ENCODE measurements at regions of chr5 and their contacts with region 1.

Region 1: DNA sequence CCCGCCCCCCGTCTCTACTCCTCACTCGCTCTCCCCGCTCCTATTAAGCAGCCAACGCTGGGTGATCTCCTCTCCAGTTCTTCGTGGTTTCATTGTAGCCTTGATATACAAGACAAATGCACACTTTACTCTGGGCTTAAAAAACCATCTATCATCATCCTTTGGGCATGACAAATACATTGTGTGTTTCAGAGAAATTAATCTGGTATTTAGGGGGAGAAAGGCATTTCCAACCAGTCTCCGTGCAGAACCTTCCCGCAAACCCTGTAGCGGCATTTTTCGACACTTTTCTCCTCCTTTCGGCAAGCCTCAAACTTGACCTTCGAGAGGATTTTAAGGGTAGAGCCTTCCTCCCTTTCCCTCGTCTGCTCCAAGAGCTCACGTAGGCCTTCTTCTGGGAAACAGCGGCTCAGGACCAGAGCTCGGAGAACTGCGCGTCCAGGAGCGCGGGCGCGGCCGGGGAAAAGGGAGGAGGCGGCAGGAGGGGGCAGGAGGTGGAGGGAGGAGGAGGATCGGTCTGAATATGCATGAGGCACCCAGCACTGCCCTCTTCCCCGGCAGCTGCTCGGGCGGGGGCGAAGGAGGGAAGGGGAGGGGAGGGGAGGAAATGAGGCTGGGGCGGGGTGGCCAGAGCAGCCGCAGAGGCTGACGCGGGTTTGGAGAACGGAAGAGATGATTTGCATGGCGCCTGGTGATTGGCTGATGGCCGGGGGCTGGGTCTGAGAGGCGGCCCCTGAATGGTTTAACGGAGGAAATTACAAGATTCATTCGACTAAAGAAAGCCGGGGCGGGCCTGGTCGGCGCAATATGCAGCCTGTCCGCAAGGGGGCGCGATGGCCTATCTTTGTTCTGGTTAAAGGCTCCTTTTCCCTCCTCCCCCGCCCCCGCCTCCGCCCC is 127.5 kb downstream of the TMEM161B start:
- DNase-seq: peak; percentile 93
- H3K4me3 Mint-ChIP-seq: no peak overlapping the region
- H3K27ac Mint-ChIP-seq: no peak overlapping the region
- H3K4me1 Mint-ChIP-seq: peaks cover 9% of the 10 kb centered on the region
- H3K27me3 Mint-ChIP-seq: peaks cover 43% of the 10 kb centered on the region

Region 2: GRCh38 chr5:87780831-87781760 is 360.0 kb before region 1 on chr5:
- CTCF ChIA-PET with region 1: no interaction called
- intact Hi-C with region 1: loop called (anchors 2 kb)
- DNase-seq: peak; percentile 88
- H3K4me3 Mint-ChIP-seq: no peak overlapping the region
- H3K27ac Mint-ChIP-seq: no peak overlapping the region
- H3K4me1 Mint-ChIP-seq: peaks cover 3% of the 10 kb centered on the region
- H3K27me3 Mint-ChIP-seq: peaks cover 24% of the 10 kb centered on the region

Region 3: GRCh38 chr5:88268385-88269184 is 127.5 kb after region 1 on chr5 and contains the start of gene TMEM161B:
- CTCF ChIA-PET with region 1: no interaction called
- intact Hi-C with region 1: loop called (anchors 1 kb)
- DNase-seq: peak; percentile 94
- H3K4me3 Mint-ChIP-seq: peak within 1 kb of the TSS; percentile 93
- H3K27ac Mint-ChIP-seq: peak within 1 kb of the TSS; percentile 96
- H3K4me1 Mint-ChIP-seq: peaks cover 42% of the 10 kb centered on the region
- H3K27me3 Mint-ChIP-seq: no peaks in the 10 kb centered on the region
- total RNA-seq, gene TMEM161B: 18.0 to 18.1 TPM

Region 4: DNA sequence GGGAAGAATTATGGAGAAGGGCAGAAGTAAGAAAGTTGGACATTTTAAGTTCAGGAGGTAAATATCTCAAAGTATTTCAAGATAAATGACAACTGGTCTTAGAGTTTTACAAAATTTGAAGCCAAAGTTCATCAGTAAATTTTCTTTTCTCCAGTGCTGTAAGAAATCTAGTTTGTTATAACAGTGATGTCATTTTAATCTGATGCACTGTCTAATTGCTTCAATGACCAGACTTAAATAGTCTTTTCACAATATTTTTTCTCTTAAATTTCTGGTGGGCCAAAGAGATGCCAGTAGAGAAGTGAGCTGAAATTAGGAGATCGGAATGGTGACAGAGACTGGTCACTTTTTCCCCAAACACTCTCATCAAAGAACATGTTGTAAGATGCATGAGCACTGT is 284.0 kb after region 1 on chr5:
- CTCF ChIA-PET with region 1: no interaction called
- intact Hi-C with region 1: no loop called
- DNase-seq: no peak
- H3K4me3 Mint-ChIP-seq: no peak overlapping the region
- H3K27ac Mint-ChIP-seq: no peak overlapping the region
- H3K4me1 Mint-ChIP-seq: no peaks in the 10 kb centered on the region
- H3K27me3 Mint-ChIP-seq: peaks cover 8% of the 10 kb centered on the region

Region 5: DNA sequence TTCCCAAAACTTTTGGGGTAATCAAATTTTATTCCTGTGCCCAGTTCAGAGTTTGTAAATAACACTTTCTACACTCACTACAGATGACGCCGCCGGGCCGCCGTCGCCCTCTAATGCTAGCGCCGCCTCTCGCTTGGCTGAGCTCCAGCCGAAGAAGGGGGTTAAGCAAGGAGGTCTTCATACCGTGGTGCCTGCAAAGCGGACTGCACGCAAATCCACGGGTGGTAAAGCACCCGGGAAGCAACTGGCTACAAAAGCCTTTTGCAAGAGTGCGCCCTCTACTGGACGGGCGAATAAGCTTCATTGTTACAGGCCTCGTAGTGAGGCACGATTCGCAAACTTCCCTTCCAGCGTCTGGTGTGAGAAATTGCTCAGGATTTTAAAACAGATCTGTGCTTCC is 461.5 kb after region 1 on chr5:
- CTCF ChIA-PET with region 1: no interaction called
- intact Hi-C with region 1: loop called (anchors 5 kb)
- DNase-seq: peak; percentile 23
- H3K4me3 Mint-ChIP-seq: no peak overlapping the region
- H3K27ac Mint-ChIP-seq: no peak overlapping the region
- H3K4me1 Mint-ChIP-seq: no peaks in the 10 kb centered on the region
- H3K27me3 Mint-ChIP-seq: peaks cover 10% of the 10 kb centered on the region

Region 6: DNA sequence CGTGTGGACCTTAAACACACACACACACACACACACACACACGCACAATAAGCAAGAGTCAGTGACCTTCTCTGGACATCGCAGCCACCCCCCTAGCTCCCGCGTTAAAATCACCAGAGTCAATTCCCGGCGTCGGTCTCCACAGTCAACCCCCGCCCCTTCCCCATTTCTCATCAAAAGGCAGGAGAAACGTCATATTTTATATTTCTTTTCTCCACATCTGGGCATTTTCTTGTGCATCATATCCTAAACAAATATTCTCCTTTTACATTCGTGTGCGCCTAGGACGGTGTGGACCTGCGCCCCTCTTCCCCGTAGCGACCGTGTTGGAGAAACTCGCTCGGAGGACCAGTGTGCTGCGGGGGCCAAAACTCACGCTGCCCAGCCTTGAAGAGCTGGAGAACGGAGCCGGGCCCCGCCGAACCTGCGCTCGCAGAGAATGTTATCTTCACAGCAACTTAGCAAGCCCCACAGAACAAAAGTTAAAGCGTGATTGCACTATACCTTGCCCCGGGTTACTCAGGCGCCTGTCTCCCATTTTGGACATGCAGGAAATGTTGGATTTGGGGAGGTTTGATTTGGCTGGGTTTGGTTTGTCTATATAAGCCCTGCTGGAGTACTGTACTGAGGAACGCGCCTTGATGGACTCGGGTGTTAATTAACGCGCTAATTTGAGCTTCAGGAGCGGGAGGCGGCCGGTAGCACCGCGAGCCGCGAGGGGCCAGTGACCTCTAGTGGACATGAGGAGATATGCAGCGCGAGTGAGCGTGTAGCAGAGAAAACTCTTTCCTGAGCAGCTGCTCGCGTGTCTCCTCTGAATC is 549.5 kb after region 1 on chr5:
- CTCF ChIA-PET with region 1: no interaction called
- intact Hi-C with region 1: loop called (anchors 2 kb)
- DNase-seq: peak; percentile 77
- H3K4me3 Mint-ChIP-seq: peak overlapping the region; percentile 65
- H3K27ac Mint-ChIP-seq: peak overlapping the region; percentile 81
- H3K4me1 Mint-ChIP-seq: peaks cover 28% of the 10 kb centered on the region
- H3K27me3 Mint-ChIP-seq: peaks cover 84% of the 10 kb centered on the region

Measured in activated naive CD4-positive, alpha-beta T cell treated with anti-CD3 and anti-CD28 coated beads for 36 hours (primary cell).